MCF 10A (cell line): ENCODE measurements at regions of chr7 and their contacts with region 1.

Region 1: DNA sequence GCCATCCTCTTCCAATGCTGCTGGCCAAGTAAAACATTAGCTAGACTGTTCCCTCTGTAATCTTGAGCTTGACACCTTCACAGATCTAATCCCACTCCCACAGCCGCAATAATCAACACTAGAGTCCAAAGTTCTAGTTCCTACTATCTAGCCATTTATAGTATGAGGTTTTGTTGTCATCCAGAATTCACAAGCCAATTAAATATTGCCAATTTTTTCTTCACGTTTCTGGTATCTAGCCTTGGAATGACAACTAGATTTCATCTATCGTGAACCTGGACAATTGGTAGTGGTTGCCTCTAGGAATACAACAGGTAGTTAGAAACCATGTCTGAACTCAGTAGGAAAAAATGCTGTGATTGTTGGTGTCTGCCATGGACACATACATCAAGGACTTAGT is 10.4 kb downstream of the WASL start:
- DNase-seq: no peak
- H3K4me3 Mint-ChIP-seq: no peak overlapping the region
- H3K27ac Mint-ChIP-seq: no peak overlapping the region
- H3K4me1 Mint-ChIP-seq: peaks cover 10% of the 10 kb centered on the region
- H3K27me3 Mint-ChIP-seq: no peaks in the 10 kb centered on the region
- CTCF ChIP-seq: no peak

Region 2: DNA sequence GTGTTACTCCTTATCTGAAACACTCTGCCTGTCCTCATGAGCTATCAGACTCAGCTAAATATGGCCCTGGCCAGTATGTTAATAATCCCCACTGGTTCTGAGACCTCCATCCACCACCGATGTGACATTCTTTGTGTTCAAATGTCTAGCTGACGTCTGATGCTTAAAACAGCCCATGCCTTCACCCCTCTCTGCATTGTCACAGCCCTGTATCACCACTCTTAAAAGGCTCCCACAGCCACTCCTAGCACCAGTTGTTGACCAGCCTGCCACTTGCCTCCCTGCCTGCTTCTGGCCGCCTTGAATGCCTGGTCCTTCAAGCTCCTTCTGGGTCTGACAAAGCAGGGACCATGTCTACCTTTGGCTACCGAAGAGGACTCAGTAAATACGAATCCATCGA is 82.7 kb before region 1 on chr7 and contains the start of gene LMOD2:
- CTCF ChIA-PET with region 1: no interaction called
- POLR2A ChIA-PET with region 1: no interaction called
- intact Hi-C with region 1: no loop called
- DNase-seq: no peak
- H3K4me3 Mint-ChIP-seq: no peak within 1 kb of the TSS
- H3K27ac Mint-ChIP-seq: no peak within 1 kb of the TSS
- H3K4me1 Mint-ChIP-seq: no peaks in the 10 kb centered on the region
- H3K27me3 Mint-ChIP-seq: no peaks in the 10 kb centered on the region
- CTCF ChIP-seq: no peak
- total RNA-seq, gene LMOD2: not detected in 2 replicates

Region 3: GRCh38 chr7:123727071-123727837 is 11.1 kb before region 1 on chr7:
- CTCF ChIA-PET with region 1: interaction called, 3 read pairs
- POLR2A ChIA-PET with region 1: interaction called, 15 read pairs
- intact Hi-C with region 1: no loop called
- DNase-seq: peak; percentile 86
- H3K4me3 Mint-ChIP-seq: peak overlapping the region; percentile 5
- H3K27ac Mint-ChIP-seq: peak overlapping the region; percentile 20
- H3K4me1 Mint-ChIP-seq: peaks cover 17% of the 10 kb centered on the region
- H3K27me3 Mint-ChIP-seq: no peaks in the 10 kb centered on the region
- CTCF ChIP-seq: no peak